MCF 10A (cell line): ENCODE measurements at regions of chr3 and their contacts with region 1.

Region 1: DNA sequence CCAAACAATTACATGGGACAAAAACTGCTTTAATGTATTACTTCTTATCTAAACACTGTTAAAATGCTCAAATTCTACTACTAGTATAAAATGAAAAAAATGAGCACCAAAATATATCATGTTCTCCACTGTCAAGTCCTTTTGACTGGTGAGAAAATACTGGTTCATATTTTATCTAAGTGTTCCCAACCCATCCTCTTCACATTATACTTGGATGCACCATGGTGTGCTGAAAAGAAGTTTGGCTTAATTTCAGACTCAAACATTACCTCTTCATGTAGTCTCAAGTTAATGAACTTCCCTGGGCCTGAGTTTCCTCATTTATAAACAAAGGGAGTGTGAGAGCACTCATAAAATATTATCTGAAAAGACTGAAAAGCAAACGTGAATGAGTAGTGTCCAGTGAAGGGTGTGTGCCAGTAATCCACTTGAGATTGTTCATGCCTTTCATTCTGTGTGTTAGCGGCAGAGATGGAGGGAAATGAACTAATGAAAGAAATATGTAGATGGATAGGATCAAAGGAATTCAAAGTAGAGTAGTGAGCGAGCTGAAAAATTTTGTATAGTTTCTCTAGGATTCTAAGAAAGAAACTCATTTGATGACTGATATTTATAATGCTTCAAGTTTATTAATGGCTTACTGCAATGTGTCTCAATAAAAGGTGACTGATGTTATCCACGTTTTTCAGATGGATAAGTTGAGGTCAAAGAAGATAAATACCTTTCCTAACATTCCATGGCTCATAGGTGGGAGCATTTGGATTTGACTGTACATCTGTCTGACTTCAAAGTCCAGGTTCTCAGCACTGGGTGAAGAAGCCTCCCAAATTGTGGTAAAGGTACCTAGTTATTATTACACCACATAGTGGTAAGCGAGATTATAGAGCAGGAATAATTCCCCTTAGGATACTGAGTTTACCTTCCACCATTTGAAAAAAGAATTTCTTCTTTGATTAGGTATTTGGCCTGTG is 263.4 kb downstream of the NLGN1 start:
- DNase-seq: no peak
- H3K4me3 Mint-ChIP-seq: no peak overlapping the region
- H3K27ac Mint-ChIP-seq: no peak overlapping the region
- H3K4me1 Mint-ChIP-seq: no peaks in the 10 kb centered on the region
- H3K27me3 Mint-ChIP-seq: peaks cover 86% of the 10 kb centered on the region
- CTCF ChIP-seq: no peak

Region 2: DNA sequence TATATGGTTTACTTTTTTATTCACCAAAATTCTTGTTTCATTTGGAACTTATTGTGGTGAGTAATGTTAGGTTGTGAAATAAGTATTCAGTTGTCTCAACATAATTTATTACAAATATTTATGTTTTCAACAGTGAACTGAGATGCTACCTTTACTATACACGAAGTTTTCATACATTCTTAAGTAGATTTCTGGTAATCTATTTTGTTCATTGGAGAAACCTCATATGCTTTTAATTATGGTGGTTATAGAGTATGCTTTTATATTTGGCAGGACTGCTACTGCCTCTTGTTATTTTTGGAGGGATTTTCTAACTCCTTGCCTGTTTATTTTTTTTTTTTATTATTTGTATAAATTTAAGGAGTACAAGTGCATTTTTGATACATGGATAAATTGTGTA is 10.3 kb before region 1 on chr3:
- CTCF ChIA-PET with region 1: no interaction called
- POLR2A ChIA-PET with region 1: no interaction called
- intact Hi-C with region 1: no loop called
- DNase-seq: no peak
- H3K4me3 Mint-ChIP-seq: no peak overlapping the region
- H3K27ac Mint-ChIP-seq: no peak overlapping the region
- H3K4me1 Mint-ChIP-seq: no peaks in the 10 kb centered on the region
- H3K27me3 Mint-ChIP-seq: peaks cover 74% of the 10 kb centered on the region
- CTCF ChIP-seq: no peak

Region 3: DNA sequence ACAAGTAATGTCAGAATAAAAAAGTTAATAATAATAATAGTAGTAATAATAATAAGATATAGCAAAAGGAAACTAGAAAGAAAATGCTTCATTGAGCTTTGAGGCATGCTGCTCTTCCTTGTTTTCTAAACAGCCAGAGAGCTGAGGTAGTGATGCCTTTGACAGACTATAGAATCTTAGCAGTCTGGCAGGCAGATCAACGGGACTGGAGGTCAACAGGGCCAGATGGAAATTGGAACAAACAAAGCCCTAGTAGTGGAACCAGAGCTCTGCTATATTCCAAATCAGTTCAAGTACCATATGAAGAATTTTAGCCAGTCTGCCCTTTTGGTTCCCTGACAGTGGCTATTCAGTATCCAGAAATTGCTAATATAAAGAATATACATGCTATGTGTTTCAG is 15.2 kb after region 1 on chr3:
- CTCF ChIA-PET with region 1: no interaction called
- POLR2A ChIA-PET with region 1: no interaction called
- intact Hi-C with region 1: loop called (anchors 1 kb)
- DNase-seq: no peak
- H3K4me3 Mint-ChIP-seq: no peak overlapping the region
- H3K27ac Mint-ChIP-seq: no peak overlapping the region
- H3K4me1 Mint-ChIP-seq: no peaks in the 10 kb centered on the region
- H3K27me3 Mint-ChIP-seq: peaks cover 34% of the 10 kb centered on the region
- CTCF ChIP-seq: no peak